ENCODE measurements at regions of chr17 and their contacts with region 1.

Region 1: DNA sequence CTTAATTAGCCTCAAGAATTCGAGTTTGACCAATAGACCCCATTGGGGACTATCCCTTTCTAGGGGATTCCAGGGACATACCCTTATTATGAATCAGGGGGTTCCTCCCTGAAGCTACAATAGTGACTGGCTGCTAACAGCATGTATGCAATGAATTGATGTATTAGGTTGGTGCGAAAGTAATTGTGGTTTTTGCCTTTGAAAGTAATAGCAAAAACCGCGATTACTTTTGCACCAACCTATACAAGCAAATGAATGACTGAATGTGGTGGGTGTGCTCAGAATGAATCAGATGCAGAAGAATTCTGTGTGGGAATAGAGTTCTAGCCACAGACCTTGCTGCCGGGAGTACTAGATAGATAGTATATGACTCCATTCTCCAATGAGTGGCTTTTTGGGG is 76.7 kb downstream of the HLF start:
- DNase-seq: peak; percentile 30
- H3K4me3 Mint-ChIP-seq: no peak overlapping the region
- H3K27ac Mint-ChIP-seq: no peak overlapping the region
- H3K4me1 Mint-ChIP-seq: peaks cover 46% of the 10 kb centered on the region
- H3K27me3 Mint-ChIP-seq: peaks cover 25% of the 10 kb centered on the region

Region 2: DNA sequence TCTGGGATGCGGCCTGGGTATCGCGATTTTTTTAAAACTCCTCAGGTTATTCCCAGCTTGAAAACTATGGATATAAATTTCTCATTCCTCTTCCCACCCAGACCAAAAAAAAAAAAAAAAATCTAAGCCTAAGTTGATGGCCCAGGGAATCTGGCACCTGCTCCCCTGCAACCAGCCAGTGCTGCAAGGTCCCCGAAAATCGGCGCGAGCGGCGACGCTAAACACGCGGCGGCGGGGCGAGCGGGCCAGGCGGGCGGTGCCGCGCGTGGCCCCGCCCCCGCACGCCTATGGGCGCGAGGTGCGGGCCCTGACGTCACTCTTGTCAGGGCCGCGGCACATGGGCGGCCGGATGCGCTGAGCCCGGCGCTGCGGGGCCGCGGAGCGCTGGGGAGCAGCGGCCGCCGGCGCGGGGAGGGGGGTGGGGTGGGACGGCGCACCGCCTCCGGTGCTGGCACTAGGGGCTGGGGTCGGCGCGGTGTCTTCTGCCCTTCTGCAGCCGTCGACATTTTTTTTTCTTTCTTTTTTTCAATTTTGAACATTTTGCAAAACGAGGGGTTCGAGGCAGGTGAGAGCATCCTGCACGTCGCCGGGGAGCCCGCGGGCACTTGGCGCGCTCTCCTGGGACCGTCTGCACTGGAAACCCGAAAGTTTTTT is 76.7 kb before region 1 on chr17 and contains the start of gene HLF:
- CTCF ChIA-PET with region 1: no interaction called
- POLR2A ChIA-PET with region 1: no interaction called
- intact Hi-C with region 1: loop called (anchors 2 kb)
- DNase-seq: peak; percentile 81
- H3K4me3 Mint-ChIP-seq: peak within 1 kb of the TSS; percentile 62
- H3K27ac Mint-ChIP-seq: no peak within 1 kb of the TSS
- H3K4me1 Mint-ChIP-seq: peaks cover 15% of the 10 kb centered on the region
- H3K27me3 Mint-ChIP-seq: peaks cover 18% of the 10 kb centered on the region
- total RNA-seq, gene HLF: 3.4 to 3.5 TPM

Region 3: DNA sequence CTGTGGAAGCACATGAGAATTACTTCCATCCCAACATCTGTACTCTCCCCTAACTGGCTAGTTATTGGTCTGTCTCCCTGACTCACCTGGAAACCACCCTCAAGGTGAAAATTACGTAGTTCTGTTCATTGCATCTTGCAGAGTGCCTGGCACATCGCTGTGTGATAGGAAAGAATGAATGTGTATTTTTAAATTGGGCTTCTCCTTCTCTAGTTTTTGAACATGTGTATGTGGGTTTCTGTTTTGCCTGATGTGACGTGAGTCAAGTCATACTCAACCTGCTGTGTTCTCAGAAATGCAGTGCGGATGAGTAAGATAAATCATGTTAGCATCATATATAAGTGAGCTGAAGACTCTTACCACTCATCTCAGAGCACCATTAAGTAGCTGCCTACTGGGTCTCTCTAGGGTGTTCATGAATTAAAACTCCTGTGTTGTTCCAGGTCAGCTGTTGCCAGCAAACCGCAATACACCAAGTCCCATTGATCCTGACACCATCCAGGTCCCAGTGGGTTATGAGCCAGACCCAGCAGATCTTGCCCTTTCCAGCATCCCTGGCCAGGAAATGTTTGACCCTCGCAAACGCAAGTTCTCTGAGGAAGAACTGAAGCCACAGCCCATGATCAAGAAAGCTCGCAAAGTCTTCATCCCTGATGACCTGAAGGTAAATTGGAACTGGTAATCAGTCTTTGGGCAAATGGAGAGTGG is 26.5 kb before region 1 on chr17:
- CTCF ChIA-PET with region 1: interaction called, 7 read pairs
- POLR2A ChIA-PET with region 1: interaction called, 5 read pairs
- intact Hi-C with region 1: loop called (anchors 1 kb)
- DNase-seq: peak; percentile 56
- H3K4me3 Mint-ChIP-seq: peak overlapping the region; percentile 18
- H3K27ac Mint-ChIP-seq: peak overlapping the region; percentile 77
- H3K4me1 Mint-ChIP-seq: peaks cover 21% of the 10 kb centered on the region
- H3K27me3 Mint-ChIP-seq: peaks cover 4% of the 10 kb centered on the region

Region 4: DNA sequence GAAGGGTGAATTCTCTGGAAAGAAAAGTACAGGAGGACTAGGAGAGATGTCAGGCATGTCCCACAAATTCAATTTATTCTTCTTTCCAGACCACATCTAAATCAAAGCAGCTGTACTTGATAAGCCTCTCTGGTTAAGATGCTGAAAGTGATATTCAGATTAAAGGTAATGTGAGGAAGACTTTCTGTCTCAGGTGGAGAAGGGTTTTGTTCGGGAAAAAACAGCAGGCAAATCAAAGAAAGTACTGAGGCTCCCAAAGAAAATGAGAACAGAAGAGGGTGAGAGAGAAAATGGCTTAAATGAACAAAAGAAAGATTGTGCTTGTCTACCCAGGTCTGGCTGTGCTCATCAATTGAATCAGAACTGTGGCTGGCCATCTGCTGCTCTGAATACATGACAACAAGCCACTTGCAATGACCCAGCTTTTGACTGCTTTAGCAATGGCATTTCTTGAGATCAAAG is 24.6 kb after region 1 on chr17:
- CTCF ChIA-PET with region 1: no interaction called
- POLR2A ChIA-PET with region 1: no interaction called
- intact Hi-C with region 1: no loop called
- DNase-seq: no peak
- H3K4me3 Mint-ChIP-seq: no peak overlapping the region
- H3K27ac Mint-ChIP-seq: no peak overlapping the region
- H3K4me1 Mint-ChIP-seq: peaks cover 3% of the 10 kb centered on the region
- H3K27me3 Mint-ChIP-seq: peaks cover 3% of the 10 kb centered on the region